ENCODE measurements at regions of chr7 and their contacts with region 1.

Region 1: GRCh38 chr7:47490501-47491265 is 91.2 kb downstream of the TNS3 start:
- DNase-seq: peak; percentile 73

Region 2: DNA sequence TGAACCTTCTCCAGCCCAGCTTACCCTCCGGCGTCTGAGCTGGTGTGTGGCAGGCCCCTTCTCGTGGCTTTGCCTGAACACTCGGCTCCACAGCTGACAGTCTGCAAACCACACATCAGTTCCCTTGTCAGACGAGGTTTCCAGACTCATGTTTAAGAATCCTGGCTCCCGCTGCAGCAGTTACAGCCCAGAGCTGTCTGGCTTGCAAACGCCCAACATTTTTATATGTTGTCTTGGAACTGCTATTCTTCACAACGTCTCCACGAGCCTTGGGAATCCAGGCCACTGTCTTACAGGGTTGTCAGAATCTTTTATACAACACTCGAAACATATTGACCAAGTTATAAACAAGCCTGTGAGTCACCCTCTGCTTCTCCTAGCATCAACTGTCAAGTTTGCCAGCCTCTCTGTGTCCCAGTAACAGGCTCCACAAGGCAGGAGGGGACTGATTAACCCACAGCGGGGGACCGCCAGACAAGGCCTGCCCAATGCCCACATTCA is 23.1 kb after region 1 on chr7:
- intact Hi-C with region 1: loop called in 1 of 2 experiments (anchors 1 kb)
- DNase-seq: peak; percentile 65

Region 3: DNA sequence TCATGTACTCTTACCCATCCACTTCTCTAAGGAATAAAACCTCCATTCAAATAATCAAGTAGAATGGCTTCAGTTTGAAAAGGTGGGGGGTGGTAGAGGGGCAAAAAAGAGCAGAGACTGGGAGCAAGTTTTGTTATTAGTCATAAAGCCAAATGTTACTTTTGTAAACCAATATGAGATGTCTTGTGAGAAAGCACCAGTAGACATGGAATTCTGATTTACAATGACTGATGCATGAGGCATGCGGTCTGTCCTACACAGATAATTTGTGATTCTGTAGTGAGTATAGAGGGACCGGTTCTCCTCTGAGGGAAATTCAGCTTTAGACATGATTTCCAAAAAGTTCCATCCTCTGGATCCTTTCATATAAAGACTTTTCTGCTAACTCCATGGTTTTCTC is 667.7 kb after region 1 on chr7:
- intact Hi-C with region 1: no loop called
- DNase-seq: no peak